IMR-90 (cell line): ENCODE measurements at regions of chrX and their contacts with region 1.

Region 1: DNA sequence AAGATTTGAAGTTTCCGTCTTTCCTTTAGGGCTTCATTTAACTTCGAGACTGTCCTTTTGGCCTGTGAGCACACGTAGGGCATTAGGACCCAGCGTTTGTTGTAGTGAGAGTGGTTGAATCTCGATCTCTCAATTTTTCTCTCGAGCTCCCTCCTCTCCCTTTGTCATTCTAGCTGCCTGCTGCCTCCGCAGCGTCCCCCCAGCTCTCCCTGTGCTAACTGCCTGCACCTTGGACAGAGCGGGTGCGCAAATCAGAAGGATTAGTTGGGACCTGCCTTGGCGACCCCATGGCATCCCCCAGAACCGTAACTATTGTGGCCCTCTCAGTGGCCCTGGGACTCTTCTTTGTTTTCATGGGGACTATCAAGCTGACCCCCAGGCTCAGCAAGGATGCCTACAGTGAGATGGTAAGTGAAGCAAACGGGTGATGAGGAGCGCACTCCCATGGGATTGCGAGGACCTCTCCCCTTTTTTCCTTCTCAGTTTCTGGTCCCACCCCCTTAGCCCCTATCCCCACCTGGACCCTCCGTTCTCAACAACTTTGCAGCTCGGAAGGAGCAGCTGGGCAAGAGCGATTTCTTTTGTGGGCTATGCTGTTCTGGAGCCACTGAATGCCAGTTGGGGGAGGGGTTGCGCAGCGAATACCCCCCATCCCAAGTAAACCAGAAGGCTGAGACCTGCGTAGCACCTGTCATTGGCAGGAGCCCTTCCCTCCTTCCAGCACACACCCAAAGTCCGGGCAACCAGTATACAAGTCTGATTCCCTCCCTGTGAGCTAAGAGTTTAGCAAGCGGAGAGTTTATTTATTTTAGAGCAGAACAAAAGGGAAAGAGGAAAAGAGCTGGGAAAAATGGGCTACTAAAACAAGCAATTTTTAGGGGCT is at the start of gene TMEM35A:
- DNase-seq: peak; percentile 51
- ATAC-seq: peak; percentile 80
- H3K4me3 ChIP-seq: peak within 1 kb of the TSS; percentile 72
- H3K27ac ChIP-seq: peak within 1 kb of the TSS; percentile 36; the same call in 1 of the 2 replicates
- H3K4me1 ChIP-seq: no peaks in the 10 kb centered on the region
- H3K27me3 ChIP-seq: no peaks in the 10 kb centered on the region
- CTCF ChIP-seq: no peak
- POLR2A ChIP-seq: no peak
- RAD21 ChIP-seq: no peak
- total RNA-seq, gene TMEM35A: 11.3 and 12.8 TPM in 2 replicates

Region 2: GRCh38 chrX:100685284-100685996 is 393.5 kb before region 1 on chrX:
- CTCF ChIA-PET with region 1: no interaction called
- POLR2A ChIA-PET with region 1: no interaction called
- dilution Hi-C with region 1: no loop called
- in situ Hi-C with region 1: no loop called
- intact Hi-C with region 1: no loop called
- DNase-seq: peak; percentile 75
- ATAC-seq: peak; percentile 90
- H3K4me3 ChIP-seq: no peak overlapping the region
- H3K27ac ChIP-seq: no peak overlapping the region
- H3K4me1 ChIP-seq: peaks cover 2% of the 10 kb centered on the region
- H3K27me3 ChIP-seq: no peaks in the 10 kb centered on the region; the same call in 1 of the 2 replicates
- CTCF ChIP-seq: peak; percentile 96
- POLR2A ChIP-seq: no peak
- RAD21 ChIP-seq: peak; percentile 81

Region 3: DNA sequence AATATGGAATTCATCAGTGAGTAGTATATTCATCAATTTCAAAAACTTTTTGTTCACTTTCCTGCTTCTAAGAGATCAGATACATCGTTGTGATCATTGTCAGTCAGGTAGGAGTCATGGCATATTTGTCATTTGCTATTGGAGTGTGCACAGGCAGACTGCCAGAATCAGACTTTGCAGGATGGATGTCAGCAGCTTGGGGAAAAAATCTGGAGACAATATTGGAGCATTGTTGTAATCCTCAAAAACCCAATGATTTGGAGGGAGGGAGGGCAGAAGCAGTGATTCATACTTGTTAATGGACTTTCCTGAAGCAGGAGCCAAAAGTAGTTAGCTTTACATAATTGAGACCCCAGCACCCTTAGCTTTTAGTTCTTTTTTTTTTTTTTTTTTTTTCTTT is 81.0 kb after region 1 on chrX:
- CTCF ChIA-PET with region 1: no interaction called
- POLR2A ChIA-PET with region 1: no interaction called
- dilution Hi-C with region 1: no loop called
- in situ Hi-C with region 1: no loop called
- intact Hi-C with region 1: no loop called
- DNase-seq: no peak
- ATAC-seq: no peak
- H3K4me3 ChIP-seq: no peak overlapping the region
- H3K27ac ChIP-seq: no peak overlapping the region
- H3K4me1 ChIP-seq: peaks cover 3% of the 10 kb centered on the region
- H3K27me3 ChIP-seq: no peaks in the 10 kb centered on the region; the same call in 1 of the 2 replicates
- CTCF ChIP-seq: no peak
- POLR2A ChIP-seq: no peak
- RAD21 ChIP-seq: no peak

Region 4: DNA sequence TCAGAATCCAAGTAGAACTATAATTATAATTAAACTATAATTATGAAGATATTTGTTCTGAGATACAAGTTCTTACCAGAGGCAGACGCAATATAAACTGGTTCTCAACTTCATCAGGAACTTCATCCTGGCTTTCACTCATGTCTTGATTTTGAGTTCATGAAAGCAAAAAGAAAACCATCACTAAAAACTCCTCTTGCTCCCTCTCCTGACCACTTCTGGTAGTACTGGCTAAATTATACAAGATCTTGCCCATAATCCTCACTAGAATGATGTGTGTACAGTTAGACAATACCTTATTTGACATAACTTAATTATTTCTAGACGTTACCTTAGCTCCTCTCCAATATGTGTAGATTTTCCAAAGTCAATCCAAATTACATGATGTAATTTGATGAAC is 208.4 kb after region 1 on chrX:
- CTCF ChIA-PET with region 1: no interaction called
- POLR2A ChIA-PET with region 1: no interaction called
- dilution Hi-C with region 1: no loop called
- in situ Hi-C with region 1: no loop called
- intact Hi-C with region 1: loop called (anchors 10 kb)
- DNase-seq: peak; percentile 52
- ATAC-seq: peak; percentile 74
- H3K4me3 ChIP-seq: no peak overlapping the region
- H3K27ac ChIP-seq: no peak overlapping the region
- H3K4me1 ChIP-seq: no peaks in the 10 kb centered on the region
- H3K27me3 ChIP-seq: no peaks in the 10 kb centered on the region
- CTCF ChIP-seq: peak; percentile 62
- POLR2A ChIP-seq: no peak
- RAD21 ChIP-seq: peak; percentile 65